AG04450 (cell line): ENCODE measurements at regions of chrX and their contacts with region 1.

Region 1: DNA sequence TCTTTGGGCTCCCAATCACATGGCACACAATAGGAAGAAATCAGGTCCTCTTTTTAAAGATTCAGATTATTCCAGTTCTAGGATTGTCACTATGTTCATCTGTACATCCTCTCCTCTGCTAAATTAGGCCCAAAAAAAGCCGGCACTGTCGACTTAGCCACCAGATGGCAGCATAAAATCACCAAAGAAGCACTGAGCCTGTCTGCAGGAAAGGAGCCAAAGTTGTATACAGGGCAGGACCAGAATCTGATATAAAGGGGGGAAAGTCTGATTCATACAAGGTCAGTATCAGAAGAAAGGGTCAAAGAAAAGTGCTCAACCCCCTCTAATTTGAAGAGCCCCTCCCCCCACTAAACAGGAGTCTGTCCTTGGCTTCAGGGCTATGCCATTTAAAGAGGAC is 292.5 kb downstream of the CHIC1 start:
- DNase-seq: peak; percentile 8
- H3K4me3 ChIP-seq: no peak overlapping the region
- H3K27ac ChIP-seq: no peak overlapping the region
- H3K27me3 ChIP-seq: no peaks in the 10 kb centered on the region
- CTCF ChIP-seq: peak; percentile 73

Region 2: DNA sequence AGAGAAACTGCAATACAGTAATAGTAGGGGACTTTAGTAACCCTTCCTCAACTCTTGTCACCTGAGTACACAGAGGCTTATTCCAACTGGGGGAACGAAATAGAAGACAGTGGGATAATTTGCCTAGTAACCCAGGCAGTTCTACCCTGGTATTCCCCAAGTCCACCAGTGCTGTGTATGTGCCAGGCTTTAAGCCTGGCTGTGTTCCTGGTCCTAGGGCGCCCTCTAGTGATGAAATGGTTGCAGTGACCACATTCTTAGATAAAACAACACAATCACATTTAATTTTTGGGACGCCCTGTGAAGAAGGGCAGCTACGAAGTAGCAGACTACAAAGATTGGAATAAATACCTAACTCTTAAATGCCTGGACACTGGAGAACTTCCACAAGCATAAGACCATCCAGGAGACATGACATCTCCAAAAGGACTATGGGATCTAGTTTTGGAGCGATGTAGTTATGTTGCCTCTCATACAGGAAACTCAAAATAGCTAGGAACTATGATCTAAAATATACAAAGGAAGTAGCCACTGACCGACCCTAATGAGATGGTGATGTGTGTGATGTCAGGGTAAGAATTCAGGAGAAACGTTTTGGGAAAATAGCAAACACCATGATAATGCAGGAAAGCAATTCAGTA is 160.0 kb after region 1 on chrX:
- CTCF ChIA-PET with region 1: interaction called, 32 read pairs
- POLR2A ChIA-PET with region 1: no interaction called
- DNase-seq: peak; percentile 27
- H3K4me3 ChIP-seq: no peak overlapping the region
- H3K27ac ChIP-seq: no peak overlapping the region
- H3K27me3 ChIP-seq: no peaks in the 10 kb centered on the region
- CTCF ChIP-seq: peak; percentile 70

Region 3: GRCh38 chrX:74133156-74133796 is 277.7 kb after region 1 on chrX:
- CTCF ChIA-PET with region 1: interaction called, 45 read pairs
- POLR2A ChIA-PET with region 1: no interaction called
- DNase-seq: peak; percentile 18
- H3K4me3 ChIP-seq: no peak overlapping the region
- H3K27ac ChIP-seq: no peak overlapping the region
- H3K27me3 ChIP-seq: no peaks in the 10 kb centered on the region
- CTCF ChIP-seq: peak; percentile 61

Region 4: GRCh38 chrX:74343343-74344279 is 488.1 kb after region 1 on chrX:
- CTCF ChIA-PET with region 1: interaction called, 11 read pairs
- POLR2A ChIA-PET with region 1: no interaction called
- DNase-seq: peak; percentile 82
- H3K4me3 ChIP-seq: no peak overlapping the region
- H3K27ac ChIP-seq: no peak overlapping the region
- H3K27me3 ChIP-seq: no peaks in the 10 kb centered on the region
- CTCF ChIP-seq: peak; percentile 53